ENCODE measurements at regions of chr1 and their contacts with region 1.

Region 1: GRCh38 chr1:192808518-192809306 is at the start of gene RGS2:
- DNase-seq: peak; percentile 96
- ATAC-seq: peak; percentile 98
- total RNA-seq, gene RGS2: 18.4 TPM

Region 2: GRCh38 chr1:192609110-192610079 is 199.3 kb before region 1 on chr1:
- intact Hi-C with region 1: loop called (anchors 10 kb)
- DNase-seq: peak; percentile 57
- ATAC-seq: no peak

Region 3: DNA sequence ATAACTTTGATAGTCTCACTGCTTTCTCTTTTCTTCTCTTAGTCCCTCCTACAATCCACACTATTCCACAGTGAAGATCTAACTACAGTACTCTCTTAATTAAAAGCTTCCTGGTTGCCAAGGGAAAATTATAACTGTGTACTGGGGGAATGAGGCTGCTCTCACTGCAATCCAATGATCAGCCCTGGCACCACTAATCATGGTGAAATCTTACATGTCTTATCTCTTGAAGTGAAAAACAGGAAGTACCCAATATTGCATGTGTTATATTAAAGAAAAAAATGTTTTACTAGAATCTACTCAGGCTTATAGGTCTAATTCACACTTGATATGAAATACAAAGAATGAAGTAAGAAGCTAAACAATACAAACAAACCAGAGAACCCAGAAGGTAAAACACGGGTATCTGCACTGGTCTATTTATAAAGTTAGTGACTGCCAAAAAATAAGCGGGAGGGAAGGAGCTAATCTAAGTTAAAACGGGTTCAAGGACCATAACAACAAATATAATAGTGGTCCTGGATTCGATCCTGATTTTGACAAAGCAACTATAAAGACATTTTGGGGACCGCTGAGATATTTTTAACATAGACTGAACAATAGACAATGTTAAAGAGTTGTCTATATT is 57.6 kb after region 1 on chr1:
- intact Hi-C with region 1: no loop called
- DNase-seq: no peak
- ATAC-seq: peak; percentile 48

Region 4: DNA sequence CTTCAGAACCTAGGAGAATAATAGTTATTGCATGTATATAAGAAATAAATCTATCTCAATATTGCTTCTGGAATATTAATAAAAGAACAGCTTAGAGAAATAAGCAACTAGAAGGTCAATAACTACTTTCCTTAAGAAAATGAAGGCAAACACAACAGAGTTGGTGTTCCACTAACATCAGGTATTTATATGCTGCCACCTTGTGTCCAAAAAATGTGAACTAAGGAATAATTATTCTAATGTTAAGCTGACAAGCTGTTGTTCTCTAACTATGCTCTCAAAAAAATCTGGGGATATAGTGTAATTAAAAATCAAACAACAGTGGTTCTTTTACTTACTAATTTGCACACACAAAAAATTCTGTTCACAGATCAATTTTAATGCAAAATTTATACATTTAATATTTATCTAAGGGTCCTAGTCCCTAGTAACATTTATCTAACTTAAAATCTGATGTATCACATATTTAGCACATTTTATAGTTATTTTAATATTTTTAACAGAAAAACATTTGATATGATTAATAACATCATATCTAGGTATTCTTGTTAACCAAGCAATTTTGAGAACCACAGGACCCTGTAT is 210.8 kb after region 1 on chr1:
- intact Hi-C with region 1: loop called (anchors 10 kb)
- DNase-seq: no peak
- ATAC-seq: peak; percentile 83